ENCODE measurements at regions of chr15 and their contacts with region 1.

Region 1: DNA sequence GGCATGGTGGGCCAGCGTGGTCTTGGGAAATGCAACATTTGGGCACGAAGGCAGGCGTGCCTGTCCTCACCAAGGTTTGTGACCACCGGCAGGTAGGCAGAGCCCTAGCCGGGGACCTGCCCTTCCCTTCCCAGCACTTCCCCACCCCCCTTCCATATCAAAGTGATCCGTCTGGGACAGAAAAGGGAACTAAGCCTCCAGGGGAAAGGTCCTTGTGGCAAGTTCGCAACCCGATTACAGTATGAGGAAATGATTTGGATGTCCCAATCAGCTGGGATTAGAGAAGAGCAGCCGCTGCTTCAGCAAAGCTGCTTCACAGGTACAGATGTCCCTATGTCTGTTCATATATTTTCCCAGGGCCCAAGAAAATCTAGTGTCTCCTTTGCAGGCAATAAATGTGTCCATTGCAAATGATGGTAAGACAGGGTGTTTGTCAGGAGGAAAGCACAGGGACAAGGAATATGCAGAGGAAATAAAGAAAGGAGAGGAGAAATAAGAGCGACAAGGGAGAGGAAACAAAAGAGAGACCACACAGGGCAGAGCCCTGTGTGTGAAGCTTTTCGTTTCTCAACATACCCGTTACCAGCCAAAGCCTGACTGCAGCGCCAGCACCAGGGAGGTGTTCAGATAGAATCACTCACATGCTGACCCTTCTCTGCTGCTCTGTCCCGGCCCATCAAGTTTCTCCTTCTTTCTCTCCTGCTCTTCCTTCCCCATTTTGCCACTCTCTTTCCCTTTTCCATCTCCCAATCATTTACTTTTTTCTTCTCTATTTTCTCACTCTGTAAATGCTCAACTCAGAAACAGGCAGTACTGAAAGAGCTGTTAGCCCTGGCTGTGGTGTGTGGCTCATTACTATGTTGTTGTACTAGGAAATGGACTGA is 17.4 kb upstream of the SECISBP2L start:
- DNase-seq: no peak
- ATAC-seq: peak; percentile 87
- H3K4me3 ChIP-seq: no peak overlapping the region
- H3K27ac ChIP-seq: no peak overlapping the region
- H3K4me1 ChIP-seq: peaks cover 22% of the 10 kb centered on the region
- H3K27me3 ChIP-seq: peaks cover 0 to 5% of the 10 kb centered on the region in 2 experiments; a peak in 1 of 5 replicates
- CTCF ChIP-seq: no peak
- EP300 ChIP-seq: no peak
- POLR2A ChIP-seq: no peak
- RAD21 ChIP-seq: no peak

Region 2: GRCh38 chr15:49101536-49101935 is 37.9 kb after region 1 on chr15:
- CTCF ChIA-PET with region 1: no interaction called
- POLR2A ChIA-PET with region 1: no interaction called
- in situ Hi-C with region 1: no loop called
- intact Hi-C with region 1: loop called (anchors 1 kb)
- DNase-seq: no peak
- ATAC-seq: no peak
- H3K4me3 ChIP-seq: no peak overlapping the region
- H3K27ac ChIP-seq: no peak overlapping the region
- H3K4me1 ChIP-seq: peaks cover 10% of the 10 kb centered on the region
- H3K27me3 ChIP-seq: no peaks in the 10 kb centered on the region
- CTCF ChIP-seq: no peak
- EP300 ChIP-seq: no peak
- POLR2A ChIP-seq: no peak
- RAD21 ChIP-seq: no peak

Measured in HepG2 (cell line).